Natural killer cell (primary cell): ENCODE measurements at regions of chrX and their contacts with region 1.

Region 1: GRCh38 chrX:154097597-154098541 is at the start of gene MECP2:
- DNase-seq: peak; percentile 84 to 92
- ATAC-seq: peak; percentile 87 to 96 (median 90)
- H3K4me3 ChIP-seq: peak within 1 kb of the TSS; percentile 82
- H3K4me3 Mint-ChIP-seq: peak within 1 kb of the TSS; percentile 94
- H3K27ac ChIP-seq: peak within 1 kb of the TSS; percentile 87
- H3K27ac Mint-ChIP-seq: peak within 1 kb of the TSS; percentile 88 to 94
- H3K4me1 ChIP-seq: peaks cover 31% of the 10 kb centered on the region
- H3K4me1 Mint-ChIP-seq: peaks cover 35 to 40% of the 10 kb centered on the region in 2 donors
- H3K27me3 ChIP-seq: no peaks in the 10 kb centered on the region
- H3K27me3 Mint-ChIP-seq: peaks cover 0 to 13% of the 10 kb centered on the region in 2 donors
- CTCF ChIP-seq: no peak
- total RNA-seq, gene MECP2: 177 to 198 (median 182) TPM

Region 2: DNA sequence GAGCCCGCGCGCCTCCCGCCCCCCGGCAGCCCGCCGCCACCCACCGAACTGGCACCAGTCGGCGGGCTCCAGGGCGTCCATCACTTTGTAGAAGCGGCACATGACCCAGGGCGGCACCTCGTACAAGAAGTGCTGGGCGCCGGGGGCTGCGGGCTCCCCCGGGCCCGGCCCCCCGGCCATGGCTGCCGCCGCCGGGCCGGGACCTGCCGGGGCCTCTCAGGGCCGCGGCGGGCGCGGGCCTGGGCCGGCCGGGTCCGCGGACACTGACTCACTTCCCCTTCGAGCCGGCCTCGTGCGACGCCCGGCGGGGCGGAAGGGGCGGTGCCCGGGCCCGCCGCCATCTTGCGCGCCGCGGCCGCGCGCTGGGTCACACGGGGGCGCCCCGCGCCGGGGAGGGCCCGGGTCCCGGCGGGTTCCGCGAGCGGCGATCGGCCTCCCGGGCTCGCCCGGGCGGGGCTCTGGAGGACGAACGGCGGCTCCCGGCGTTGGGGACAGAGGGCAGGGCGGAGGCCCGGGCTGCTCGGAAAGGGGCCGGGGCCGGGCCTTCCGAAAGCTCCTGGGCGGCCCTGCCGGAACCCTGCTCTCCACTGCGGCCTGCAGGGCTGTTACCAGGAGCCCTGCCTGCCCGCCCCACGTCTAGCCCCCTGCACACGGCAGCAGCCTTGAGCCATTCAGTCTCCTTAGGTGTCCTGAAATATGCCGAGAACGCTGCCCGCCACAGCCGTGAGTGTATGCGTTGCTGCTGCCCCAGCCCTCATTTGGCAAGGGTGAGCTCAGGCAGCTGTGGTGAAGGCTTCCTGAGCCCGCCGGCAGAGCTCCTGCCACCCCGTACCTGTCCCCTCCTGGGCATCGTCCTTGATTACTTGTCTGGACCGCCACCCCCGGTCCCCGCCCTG is 78.0 kb before region 1 on chrX and contains the start of gene IRAK1:
- intact Hi-C with region 1: loop called (anchors 10 kb)
- DNase-seq: peak; percentile 53 to 77
- ATAC-seq: peak; percentile 86 to 92 (median 87)
- H3K4me3 ChIP-seq: peak within 1 kb of the TSS; percentile 50
- H3K4me3 Mint-ChIP-seq: peak within 1 kb of the TSS; percentile 89
- H3K27ac ChIP-seq: peak within 1 kb of the TSS; percentile 77
- H3K27ac Mint-ChIP-seq: peak within 1 kb of the TSS; percentile 86 to 91
- H3K4me1 ChIP-seq: peaks cover 27% of the 10 kb centered on the region
- H3K4me1 Mint-ChIP-seq: peaks cover 0 to 6% of the 10 kb centered on the region in 2 donors
- H3K27me3 ChIP-seq: no peaks in the 10 kb centered on the region
- H3K27me3 Mint-ChIP-seq: no peaks in the 10 kb centered on the region
- CTCF ChIP-seq: no peak
- total RNA-seq, gene IRAK1: 87.5 to 114 (median 107) TPM

Region 3: GRCh38 chrX:154378782-154379591 is 281.1 kb after region 1 on chrX and contains the start of gene EMD:
- intact Hi-C with region 1: loop called (anchors 10 kb)
- DNase-seq: peak; percentile 93 to 97
- ATAC-seq: peak; percentile 76 to 91 (median 79)
- H3K4me3 ChIP-seq: peak within 1 kb of the TSS; percentile 67
- H3K4me3 Mint-ChIP-seq: peak within 1 kb of the TSS; percentile 88
- H3K27ac ChIP-seq: peak within 1 kb of the TSS; percentile 97
- H3K27ac Mint-ChIP-seq: peak within 1 kb of the TSS; percentile 80 to 91
- H3K4me1 ChIP-seq: peaks cover 38% of the 10 kb centered on the region
- H3K4me1 Mint-ChIP-seq: peaks cover 11 to 12% of the 10 kb centered on the region in 2 donors
- H3K27me3 ChIP-seq: no peaks in the 10 kb centered on the region
- H3K27me3 Mint-ChIP-seq: no peaks in the 10 kb centered on the region
- CTCF ChIP-seq: no peak
- total RNA-seq, gene EMD: 141 to 175 (median 152) TPM

Region 4: DNA sequence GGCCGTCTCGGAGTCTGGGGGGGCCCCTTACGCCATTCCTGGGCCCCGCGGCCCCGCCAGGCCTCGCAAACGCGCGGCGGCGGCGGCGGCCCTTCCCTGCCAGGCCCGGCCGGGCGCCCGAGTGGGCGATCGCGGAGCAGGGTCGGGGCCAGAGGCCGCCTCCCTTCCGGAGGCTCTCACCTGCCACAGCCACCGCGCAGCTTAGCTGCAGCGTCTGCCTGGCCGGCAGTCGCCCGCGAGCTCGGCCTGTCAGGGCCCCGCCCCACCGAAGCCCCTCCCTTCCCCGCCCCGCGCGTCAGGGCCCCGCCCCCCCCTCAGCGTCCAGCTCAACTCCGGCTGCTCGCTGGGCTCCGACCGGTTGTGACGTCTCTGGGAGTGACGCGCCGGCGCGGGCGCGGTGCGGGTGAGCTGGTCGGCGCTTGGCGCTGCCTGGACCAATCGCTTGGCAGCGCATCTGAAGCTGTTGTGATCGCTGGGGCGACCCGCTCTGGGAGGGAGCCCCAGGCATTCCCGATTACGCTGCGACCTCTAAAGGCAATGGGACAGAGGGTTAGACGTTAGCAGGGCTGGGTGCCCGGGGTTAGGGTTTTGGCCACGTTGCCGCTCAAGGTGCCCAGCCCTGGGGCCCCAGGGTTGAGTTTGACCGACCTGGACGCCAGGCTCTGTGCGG is 392.7 kb after region 1 on chrX and contains the start of gene SLC10A3:
- intact Hi-C with region 1: no loop called
- DNase-seq: peak; percentile 81 to 92
- ATAC-seq: peak; percentile 86 to 94 (median 86)
- H3K4me3 ChIP-seq: peak within 1 kb of the TSS; percentile 63
- H3K4me3 Mint-ChIP-seq: peak within 1 kb of the TSS; percentile 90
- H3K27ac ChIP-seq: peak within 1 kb of the TSS; percentile 88
- H3K27ac Mint-ChIP-seq: peak within 1 kb of the TSS; percentile 88 to 93
- H3K4me1 ChIP-seq: peaks cover 43% of the 10 kb centered on the region
- H3K4me1 Mint-ChIP-seq: peaks cover 15 to 17% of the 10 kb centered on the region in 2 donors
- H3K27me3 ChIP-seq: no peaks in the 10 kb centered on the region
- H3K27me3 Mint-ChIP-seq: no peaks in the 10 kb centered on the region
- CTCF ChIP-seq: no peak
- total RNA-seq, gene SLC10A3: 26.5 to 42.1 (median 31.8) TPM